Left lung (tissue), 14 donors: ENCODE measurements at regions of chr3 and their contacts with region 1.

Region 1: DNA sequence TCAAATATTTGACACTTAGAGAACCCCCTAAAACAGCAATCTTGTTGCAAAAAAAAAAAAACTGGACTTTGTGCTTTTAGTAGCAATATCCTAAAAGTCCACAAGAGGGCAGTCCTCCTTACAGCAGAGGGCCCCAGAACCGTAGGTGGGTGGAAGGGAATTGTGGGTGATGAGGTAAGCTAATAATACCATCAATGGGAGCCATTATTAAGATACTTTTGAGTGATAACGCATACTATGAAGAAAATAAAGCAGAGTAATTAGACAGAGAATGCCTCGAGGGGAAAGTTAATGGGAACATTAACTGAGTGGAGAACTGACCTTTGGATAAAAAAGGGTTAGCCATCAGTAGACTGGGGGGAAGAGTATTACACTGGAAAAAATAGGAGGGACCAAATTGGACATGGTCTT is 229.9 kb downstream of the THRB start:
- DNase-seq: no peak
- ATAC-seq: peak; percentile 82
- H3K4me3 ChIP-seq: no peak overlapping the region
- H3K27ac ChIP-seq: no peak overlapping the region
- H3K4me1 ChIP-seq: no peaks in the 10 kb centered on the region
- H3K27me3 ChIP-seq: no peaks in the 10 kb centered on the region
- CTCF ChIP-seq: peak; percentile 54 to 70

Region 2: DNA sequence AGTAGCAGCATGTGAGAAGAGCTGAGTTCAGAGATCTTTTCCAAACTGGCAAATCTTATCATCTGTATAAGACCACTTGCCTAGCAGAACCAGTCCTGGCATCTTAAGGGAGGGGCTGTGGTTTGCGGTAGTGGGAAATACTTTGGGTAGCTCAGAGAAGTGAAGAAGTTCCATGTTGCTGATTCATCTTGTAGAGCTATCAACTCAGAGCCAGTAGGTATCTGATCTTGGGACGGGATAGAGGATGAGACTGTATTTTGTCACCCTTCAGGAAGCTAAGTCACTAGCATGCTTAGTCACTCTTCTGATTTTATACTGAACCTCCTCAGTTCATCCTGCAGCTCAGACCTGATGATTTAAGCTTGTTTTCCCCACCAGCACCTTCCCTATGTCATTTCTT is 108.3 kb before region 1 on chr3:
- intact Hi-C with region 1: no loop called
- DNase-seq: no peak
- ATAC-seq: no peak
- H3K4me3 ChIP-seq: no peak overlapping the region
- H3K27ac ChIP-seq: no peak overlapping the region
- H3K4me1 ChIP-seq: no peaks in the 10 kb centered on the region
- H3K27me3 ChIP-seq: no peaks in the 10 kb centered on the region
- CTCF ChIP-seq: no peak

Region 3: GRCh38 chr3:24494618-24495325 is 230.0 kb after region 1 on chr3 and contains the start of gene THRB:
- intact Hi-C with region 1: loop called in 1 of 2 experiments (anchors 10 kb)
- DNase-seq: peak; percentile 71 to 88 (median 80)
- ATAC-seq: peak; percentile 78
- H3K4me3 ChIP-seq: peak within 1 kb of the TSS; percentile 59 to 62
- H3K27ac ChIP-seq: peak within 1 kb of the TSS; percentile 87 to 89
- H3K4me1 ChIP-seq: peaks cover 2 to 14% of the 10 kb centered on the region in 2 donors
- H3K27me3 ChIP-seq: peaks cover 0 to 44% of the 10 kb centered on the region in 2 donors
- CTCF ChIP-seq: peak in 1 of 2 donors; percentile 40
- polyA plus RNA-seq, gene THRB: 13.0 to 18.6 (median 17.4) TPM